Psoas muscle (tissue), 8 donors: ENCODE measurements at regions of chr10 and their contacts with region 1.

Region 1: DNA sequence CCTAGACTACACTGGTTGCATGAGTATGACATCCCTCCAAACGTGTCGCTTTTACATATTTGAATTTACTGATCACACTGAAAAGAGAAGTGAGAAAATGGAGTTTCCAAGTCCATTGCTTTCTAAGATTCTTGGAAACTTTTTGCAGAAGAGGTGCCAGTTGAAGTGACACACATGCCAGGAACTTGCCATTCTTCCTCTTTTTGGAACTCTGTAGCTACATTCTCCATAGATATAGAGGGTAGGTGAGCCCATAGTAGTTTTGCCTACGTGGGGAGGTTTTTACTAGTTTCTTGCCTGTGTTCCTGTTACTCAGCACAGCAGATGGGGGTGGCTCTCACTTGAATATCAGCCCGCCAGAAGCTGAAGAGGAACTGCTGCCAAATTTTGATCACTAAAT is 286.6 kb upstream of the NRP1 start:
- DNase-seq: no peak
- ATAC-seq: no peak
- H3K4me3 ChIP-seq: no peak overlapping the region
- H3K27ac ChIP-seq: no peak overlapping the region
- H3K4me1 ChIP-seq: no peaks in the 10 kb centered on the region
- H3K27me3 ChIP-seq: no peaks in the 10 kb centered on the region
- CTCF ChIP-seq: no peak

Region 2: GRCh38 chr10:33487014-33487776 is 133.9 kb before region 1 on chr10:
- intact Hi-C with region 1: loop called in 1 of 2 experiments (anchors 5 kb)
- DNase-seq: no peak
- ATAC-seq: no peak
- H3K4me3 ChIP-seq: no peak overlapping the region
- H3K27ac ChIP-seq: no peak overlapping the region
- H3K4me1 ChIP-seq: no peaks in the 10 kb centered on the region
- H3K27me3 ChIP-seq: no peaks in the 10 kb centered on the region
- CTCF ChIP-seq: no peak

Region 3: GRCh38 chr10:33715303-33715975 is 94.3 kb after region 1 on chr10:
- intact Hi-C with region 1: no loop called
- DNase-seq: peak in 1 of 2 donors; percentile 52
- ATAC-seq: peak in 2 of 4 donors; percentile 61 to 64
- H3K4me3 ChIP-seq: no peak overlapping the region
- H3K27ac ChIP-seq: no peak overlapping the region
- H3K4me1 ChIP-seq: peaks cover 5% of the 10 kb centered on the region
- H3K27me3 ChIP-seq: no peaks in the 10 kb centered on the region
- CTCF ChIP-seq: no peak